Activated naive CD4-positive, alpha-beta T cell treated with anti-CD3 and anti-CD28 coated beads for 36 hours (primary cell): ENCODE measurements at regions of chr11 and their contacts with region 1.

Region 1: GRCh38 chr11:124837491-124837856 is 27.8 kb upstream of the ROBO3 start:
- DNase-seq: peak; percentile 20
- H3K4me3 Mint-ChIP-seq: no peak overlapping the region
- H3K27ac Mint-ChIP-seq: no peak overlapping the region
- H3K4me1 Mint-ChIP-seq: peaks cover 20% of the 10 kb centered on the region
- H3K27me3 Mint-ChIP-seq: peaks cover 54% of the 10 kb centered on the region

Region 2: DNA sequence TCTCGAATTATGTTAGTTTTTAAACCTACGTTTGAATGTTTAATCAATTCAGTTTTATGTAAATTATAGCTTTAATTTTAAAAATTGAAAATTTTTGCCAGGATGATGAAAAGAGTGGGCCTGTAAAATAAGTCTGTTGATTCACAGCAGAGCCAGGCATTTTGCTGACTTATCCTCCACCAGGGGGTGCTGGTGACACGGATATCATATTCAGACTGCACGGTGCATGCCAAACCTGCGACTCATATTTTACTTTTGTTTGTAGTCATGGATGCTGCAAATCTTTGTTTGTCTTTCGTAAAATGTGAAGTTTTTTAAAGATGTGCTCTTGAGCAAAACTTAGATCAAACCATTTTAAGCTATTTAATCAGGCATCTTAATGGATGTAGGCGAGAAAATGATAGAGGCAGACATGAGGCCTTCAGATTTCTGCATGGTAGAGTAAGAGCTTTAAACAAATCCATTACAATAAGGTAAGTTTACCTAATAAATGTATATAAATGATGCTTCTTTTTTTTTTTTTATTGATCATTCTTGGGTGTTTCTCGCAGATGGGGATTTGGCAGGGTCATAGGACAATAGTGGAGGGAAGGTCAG is 435.1 kb before region 1 on chr11:
- CTCF ChIA-PET with region 1: no interaction called
- intact Hi-C with region 1: loop called (anchors 2 kb)
- DNase-seq: peak; percentile 82
- H3K4me3 Mint-ChIP-seq: no peak overlapping the region
- H3K27ac Mint-ChIP-seq: no peak overlapping the region
- H3K4me1 Mint-ChIP-seq: no peaks in the 10 kb centered on the region
- H3K27me3 Mint-ChIP-seq: peaks cover 6% of the 10 kb centered on the region

Region 3: GRCh38 chr11:124633355-124633754 is 204.1 kb before region 1 on chr11:
- CTCF ChIA-PET with region 1: no interaction called
- intact Hi-C with region 1: no loop called
- DNase-seq: no peak
- H3K4me3 Mint-ChIP-seq: no peak overlapping the region
- H3K27ac Mint-ChIP-seq: no peak overlapping the region
- H3K4me1 Mint-ChIP-seq: peaks cover 2% of the 10 kb centered on the region
- H3K27me3 Mint-ChIP-seq: no peaks in the 10 kb centered on the region

Region 4: GRCh38 chr11:124739479-124740276 is 97.8 kb before region 1 on chr11 and contains the start of gene NRGN:
- CTCF ChIA-PET with region 1: interaction called, 8 read pairs
- intact Hi-C with region 1: loop called (anchors 1 kb)
- DNase-seq: peak; percentile 90
- H3K4me3 Mint-ChIP-seq: peak within 1 kb of the TSS; percentile 77
- H3K27ac Mint-ChIP-seq: no peak within 1 kb of the TSS
- H3K4me1 Mint-ChIP-seq: peaks cover 8% of the 10 kb centered on the region
- H3K27me3 Mint-ChIP-seq: peaks cover 2% of the 10 kb centered on the region
- total RNA-seq, gene NRGN: 10.3 to 10.8 TPM

Region 5: GRCh38 chr11:124793466-124794278 is 43.8 kb before region 1 on chr11:
- CTCF ChIA-PET with region 1: interaction called, 22 read pairs
- intact Hi-C with region 1: no loop called
- DNase-seq: peak; percentile 30
- H3K4me3 Mint-ChIP-seq: no peak overlapping the region
- H3K27ac Mint-ChIP-seq: no peak overlapping the region
- H3K4me1 Mint-ChIP-seq: peaks cover 41% of the 10 kb centered on the region
- H3K27me3 Mint-ChIP-seq: no peaks in the 10 kb centered on the region

Region 6: DNA sequence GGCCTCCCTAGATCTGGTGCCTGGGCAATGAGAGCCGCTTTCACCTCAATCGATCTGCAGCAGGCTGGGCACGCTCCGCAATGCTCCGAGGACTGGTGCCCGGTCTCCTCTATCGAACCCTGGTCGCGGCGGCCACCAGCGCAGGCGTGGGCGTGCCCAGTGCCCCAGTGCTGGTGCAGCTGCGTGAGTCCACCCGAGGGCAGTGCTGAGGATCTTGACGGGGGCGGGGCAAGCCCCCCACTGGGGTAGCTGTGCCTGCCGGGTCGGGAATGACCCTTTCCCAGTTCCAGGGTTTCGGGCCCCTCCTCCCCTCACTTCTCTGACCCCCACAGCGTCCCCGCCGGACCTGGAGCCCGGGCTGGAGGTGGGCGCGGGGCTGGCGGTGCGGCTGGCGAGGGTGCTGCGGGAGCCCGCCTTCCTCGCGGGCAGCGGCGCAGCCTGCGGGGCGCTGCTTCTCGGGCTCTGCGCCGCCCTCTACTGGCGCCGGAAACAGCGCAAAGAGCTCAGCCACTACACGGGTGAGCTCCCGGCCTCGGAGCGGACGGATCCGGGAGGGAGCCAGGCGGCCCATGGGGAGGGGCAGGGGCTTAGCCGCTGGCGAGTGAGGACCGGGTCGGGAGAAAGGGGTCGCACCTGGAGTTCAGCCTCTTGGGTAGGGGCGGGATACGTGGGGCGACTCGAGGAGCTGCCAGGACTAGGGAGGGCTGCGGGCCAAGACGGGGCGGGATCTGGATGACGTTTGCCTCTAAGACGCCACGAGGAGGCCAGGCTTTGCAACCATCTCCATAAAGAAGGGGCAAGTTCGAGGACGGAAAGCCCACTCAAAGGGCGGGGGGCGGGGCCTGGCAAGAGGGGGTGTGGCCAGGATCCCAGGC is 38.7 kb after region 1 on chr11:
- CTCF ChIA-PET with region 1: interaction called, 11 read pairs
- intact Hi-C with region 1: loop called (anchors 2 kb)
- DNase-seq: peak; percentile 86
- H3K4me3 Mint-ChIP-seq: peak overlapping the region; percentile 83
- H3K27ac Mint-ChIP-seq: peak overlapping the region; percentile 73
- H3K4me1 Mint-ChIP-seq: peaks cover 19% of the 10 kb centered on the region
- H3K27me3 Mint-ChIP-seq: peaks cover 23% of the 10 kb centered on the region

Region 7: DNA sequence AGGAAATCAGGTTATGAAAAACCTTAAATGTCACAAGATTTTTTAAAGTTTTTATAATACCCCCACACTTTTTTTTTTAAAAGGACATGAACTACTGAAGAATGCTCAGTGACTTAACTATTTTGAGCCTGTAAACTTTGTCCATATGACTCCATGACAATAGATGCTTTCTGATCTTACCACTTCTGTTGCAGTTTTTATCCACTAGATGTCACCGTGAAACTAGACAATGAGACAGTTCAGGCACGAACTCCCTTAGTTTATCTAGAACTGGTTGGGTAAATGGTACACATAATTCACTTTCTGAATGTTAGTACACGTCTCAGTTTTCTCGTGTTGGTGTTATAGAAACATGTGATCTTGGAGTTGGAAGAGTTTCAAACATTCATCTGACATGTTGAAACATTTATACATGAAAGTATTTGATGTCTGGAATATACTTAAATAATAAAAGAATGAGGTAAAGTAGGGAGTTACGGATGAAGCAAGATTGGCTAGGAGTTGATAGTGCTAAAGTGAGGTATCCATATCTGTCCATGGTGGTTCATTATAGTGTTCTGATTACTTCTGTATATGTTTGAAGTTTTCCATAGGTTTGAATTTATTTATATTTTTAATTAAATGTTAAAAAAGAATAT is 124.6 kb after region 1 on chr11:
- CTCF ChIA-PET with region 1: no interaction called
- intact Hi-C with region 1: no loop called
- DNase-seq: no peak
- H3K4me3 Mint-ChIP-seq: no peak overlapping the region
- H3K27ac Mint-ChIP-seq: no peak overlapping the region
- H3K4me1 Mint-ChIP-seq: no peaks in the 10 kb centered on the region
- H3K27me3 Mint-ChIP-seq: no peaks in the 10 kb centered on the region

Region 8: GRCh38 chr11:125345421-125346178 is 508.1 kb after region 1 on chr11:
- CTCF ChIA-PET with region 1: no interaction called
- intact Hi-C with region 1: loop called (anchors 1 kb)
- DNase-seq: peak; percentile 66
- H3K4me3 Mint-ChIP-seq: no peak overlapping the region
- H3K27ac Mint-ChIP-seq: no peak overlapping the region
- H3K4me1 Mint-ChIP-seq: no peaks in the 10 kb centered on the region
- H3K27me3 Mint-ChIP-seq: peaks cover 6% of the 10 kb centered on the region

Region 9: GRCh38 chr11:125871391-125872137 is 1034.1 kb after region 1 on chr11:
- CTCF ChIA-PET with region 1: no interaction called
- intact Hi-C with region 1: no loop called
- DNase-seq: peak; percentile 55
- H3K4me3 Mint-ChIP-seq: no peak overlapping the region
- H3K27ac Mint-ChIP-seq: no peak overlapping the region
- H3K4me1 Mint-ChIP-seq: no peaks in the 10 kb centered on the region
- H3K27me3 Mint-ChIP-seq: peaks cover 1% of the 10 kb centered on the region